ENCODE measurements at regions of chr4 and their contacts with region 1.

Region 1: GRCh38 chr4:113394730-113395530 is 345.5 kb downstream of the ANK2 start:
- DNase-seq: peak; percentile 35
- H3K4me3 ChIP-seq: no peak overlapping the region
- H3K27ac ChIP-seq: no peak overlapping the region
- H3K4me1 ChIP-seq: peaks cover 0 to 8% (median 4%) of the 10 kb centered on the region in 4 donors
- H3K27me3 ChIP-seq: no peaks in the 10 kb centered on the region
- CTCF ChIP-seq: peak; percentile 84 to 90 (median 85)
- EP300 ChIP-seq: no peak
- POLR2A ChIP-seq: no peak

Region 2: DNA sequence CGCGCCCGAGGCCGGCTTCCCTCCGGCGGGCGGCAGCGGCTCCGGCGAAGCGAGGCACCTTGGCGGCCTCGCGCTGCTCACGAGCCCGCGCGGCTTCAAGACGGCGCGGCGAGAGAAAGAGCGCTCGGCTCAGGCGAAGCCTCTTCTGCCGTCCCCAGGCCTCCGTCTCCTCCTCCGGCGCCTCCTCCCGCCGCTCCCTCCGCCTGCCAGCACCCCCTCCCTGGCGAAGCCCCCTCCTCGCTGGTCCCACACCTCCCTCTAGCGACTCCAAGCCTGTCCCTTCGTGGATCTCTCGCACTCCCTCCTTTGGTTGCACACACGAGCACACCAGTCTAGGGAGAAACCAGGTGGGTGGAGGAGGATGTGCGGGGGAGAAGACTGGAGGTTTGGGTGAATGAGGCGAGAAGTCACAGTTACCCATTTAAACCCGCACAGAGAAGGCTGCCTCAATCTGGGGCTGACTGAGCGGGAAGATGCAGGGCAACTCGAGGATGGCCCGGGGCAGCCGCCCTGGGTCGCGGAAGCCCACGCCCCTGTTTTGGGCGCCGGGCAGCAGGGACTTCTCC is 366.8 kb after region 1 on chr4 and contains the start of gene CAMK2D:
- in situ Hi-C with region 1: loop called in 2 of 4 experiments (anchors 25 kb)
- intact Hi-C with region 1: loop called (anchors 5 kb)
- DNase-seq: peak; percentile 90
- H3K4me3 ChIP-seq: peak within 1 kb of the TSS; percentile 57 to 78 (median 70)
- H3K27ac ChIP-seq: peak within 1 kb of the TSS; percentile 97 to 100 (median 98)
- H3K4me1 ChIP-seq: peaks cover 9 to 39% (median 14%) of the 10 kb centered on the region in 4 donors
- H3K27me3 ChIP-seq: no peaks in the 10 kb centered on the region
- CTCF ChIP-seq: peak; percentile 36 to 74 (median 41)
- EP300 ChIP-seq: no peak
- POLR2A ChIP-seq: no peak
- total RNA-seq, gene CAMK2D: 54.5 to 107 (median 84.7) TPM

Region 3: DNA sequence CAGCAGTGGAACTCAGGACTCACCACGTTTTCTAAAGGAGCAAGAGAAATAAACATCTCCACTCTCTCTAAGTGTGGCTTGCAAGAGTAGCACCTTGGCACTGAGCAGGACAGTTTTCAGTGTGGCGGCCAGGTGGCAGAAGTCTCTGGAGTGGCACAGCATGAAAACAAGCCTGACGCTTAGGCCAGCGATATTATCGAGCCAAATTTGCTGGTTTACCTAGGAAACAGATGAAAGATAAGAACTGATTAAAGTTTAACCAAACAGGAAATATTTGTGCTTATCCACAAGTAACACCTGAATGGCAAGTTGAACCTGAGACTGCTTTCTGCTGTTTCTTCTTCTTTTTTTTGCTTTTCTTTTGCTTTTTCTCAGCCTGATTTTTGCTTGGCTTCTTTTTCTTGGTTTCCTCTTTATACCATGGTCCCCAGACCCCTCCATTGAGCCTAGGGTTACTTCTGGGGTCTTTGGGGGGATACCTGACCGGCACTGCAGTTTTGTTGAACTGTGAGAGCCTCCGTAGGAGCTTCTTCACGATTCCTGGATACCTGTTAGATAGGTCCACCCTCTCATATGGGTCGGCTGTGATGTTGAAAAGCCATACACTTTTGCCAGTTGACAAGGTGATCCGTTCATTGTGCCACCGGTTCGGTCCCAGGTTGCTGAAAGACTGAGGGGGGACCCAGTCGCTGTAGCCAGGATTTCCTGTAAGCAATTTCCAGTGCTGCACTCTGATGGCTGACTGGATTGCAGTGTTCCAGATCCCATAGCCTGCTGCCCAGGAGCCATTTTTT is 507.3 kb after region 1 on chr4:
- in situ Hi-C with region 1: loop called in 1 of 4 experiments (anchors 25 kb)
- intact Hi-C with region 1: no loop called
- DNase-seq: peak; percentile 73
- H3K4me3 ChIP-seq: no peak overlapping the region
- H3K27ac ChIP-seq: peak overlapping the region; percentile 17 to 59 (median 49)
- H3K4me1 ChIP-seq: peaks cover 0 to 6% (median 0%) of the 10 kb centered on the region in 4 donors
- H3K27me3 ChIP-seq: no peaks in the 10 kb centered on the region
- CTCF ChIP-seq: peak; percentile 26 to 68 (median 53)
- EP300 ChIP-seq: no peak
- POLR2A ChIP-seq: no peak

Region 4: GRCh38 chr4:113979148-113979904 is 584.4 kb after region 1 on chr4 and contains the start of gene ARSJ:
- in situ Hi-C with region 1: no loop called
- intact Hi-C with region 1: loop called (anchors 10 kb)
- DNase-seq: peak; percentile 54
- H3K4me3 ChIP-seq: peak within 1 kb of the TSS; percentile 49 to 81 (median 63)
- H3K27ac ChIP-seq: peak within 1 kb of the TSS; percentile 80 to 86 (median 84)
- H3K4me1 ChIP-seq: peaks cover 0 to 20% (median 0%) of the 10 kb centered on the region in 4 donors
- H3K27me3 ChIP-seq: peaks cover 3% of the 10 kb centered on the region
- CTCF ChIP-seq: peak in 2 of 5 experiments; percentile 4 to 14
- EP300 ChIP-seq: no peak
- POLR2A ChIP-seq: peak; percentile 56
- total RNA-seq, gene ARSJ: 1.8 to 5.2 (median 2.8) TPM

Region 5: GRCh38 chr4:114180481-114180880 is 785.6 kb after region 1 on chr4:
- in situ Hi-C with region 1: loop called in 1 of 4 experiments (anchors 25 kb)
- intact Hi-C with region 1: no loop called
- DNase-seq: no peak
- H3K4me3 ChIP-seq: no peak overlapping the region
- H3K27ac ChIP-seq: no peak overlapping the region
- H3K4me1 ChIP-seq: no peaks in the 10 kb centered on the region
- H3K27me3 ChIP-seq: no peaks in the 10 kb centered on the region
- CTCF ChIP-seq: peak in 3 of 5 experiments; percentile 11 to 35 (median 21)
- EP300 ChIP-seq: no peak
- POLR2A ChIP-seq: no peak

Region 6: GRCh38 chr4:114386637-114387233 is 991.8 kb after region 1 on chr4:
- in situ Hi-C with region 1: loop called (anchors 25 kb)
- intact Hi-C with region 1: no loop called
- DNase-seq: no peak
- H3K4me3 ChIP-seq: no peak overlapping the region
- H3K27ac ChIP-seq: no peak overlapping the region
- H3K4me1 ChIP-seq: peaks cover 0 to 5% (median 0%) of the 10 kb centered on the region in 4 donors
- H3K27me3 ChIP-seq: no peaks in the 10 kb centered on the region
- CTCF ChIP-seq: peak; percentile 59 to 71 (median 67)
- EP300 ChIP-seq: no peak
- POLR2A ChIP-seq: no peak

Region 7: GRCh38 chr4:114694770-114695169 is 1299.8 kb after region 1 on chr4:
- in situ Hi-C with region 1: loop called in 1 of 4 experiments (anchors 25 kb)
- intact Hi-C with region 1: no loop called
- DNase-seq: no peak
- H3K4me3 ChIP-seq: no peak overlapping the region
- H3K27ac ChIP-seq: no peak overlapping the region
- H3K4me1 ChIP-seq: no peaks in the 10 kb centered on the region
- H3K27me3 ChIP-seq: no peaks in the 10 kb centered on the region
- CTCF ChIP-seq: peak; percentile 54 to 68 (median 57)
- EP300 ChIP-seq: no peak
- POLR2A ChIP-seq: no peak

Measured in transverse colon (tissue), 4 donors.